IMR-90 (cell line): ENCODE measurements at regions of chrX and their contacts with region 1.

Region 1: GRCh38 chrX:23782863-23783568 is at the start of gene SAT1:
- DNase-seq: peak; percentile 91
- ATAC-seq: peak; percentile 92
- H3K4me3 ChIP-seq: peak within 1 kb of the TSS; percentile 74
- H3K27ac ChIP-seq: peak within 1 kb of the TSS; percentile 78
- H3K4me1 ChIP-seq: no peaks in the 10 kb centered on the region; the same call in 1 of the 2 replicates
- H3K27me3 ChIP-seq: no peaks in the 10 kb centered on the region
- CTCF ChIP-seq: peak; percentile 69
- POLR2A ChIP-seq: peak; percentile 100
- RAD21 ChIP-seq: peak; percentile 58
- total RNA-seq, gene SAT1: 55.9 and 112 TPM in 2 replicates

Region 2: GRCh38 chrX:23694606-23695005 is 88.4 kb before region 1 on chrX:
- CTCF ChIA-PET with region 1: no interaction called
- POLR2A ChIA-PET with region 1: no interaction called
- dilution Hi-C with region 1: no loop called
- in situ Hi-C with region 1: no loop called
- intact Hi-C with region 1: no loop called
- DNase-seq: peak; percentile 57
- ATAC-seq: peak; percentile 96
- H3K4me3 ChIP-seq: no peak overlapping the region
- H3K27ac ChIP-seq: no peak overlapping the region
- H3K4me1 ChIP-seq: no peaks in the 10 kb centered on the region
- H3K27me3 ChIP-seq: no peaks in the 10 kb centered on the region
- CTCF ChIP-seq: peak; percentile 61
- POLR2A ChIP-seq: no peak
- RAD21 ChIP-seq: peak; percentile 66

Region 3: DNA sequence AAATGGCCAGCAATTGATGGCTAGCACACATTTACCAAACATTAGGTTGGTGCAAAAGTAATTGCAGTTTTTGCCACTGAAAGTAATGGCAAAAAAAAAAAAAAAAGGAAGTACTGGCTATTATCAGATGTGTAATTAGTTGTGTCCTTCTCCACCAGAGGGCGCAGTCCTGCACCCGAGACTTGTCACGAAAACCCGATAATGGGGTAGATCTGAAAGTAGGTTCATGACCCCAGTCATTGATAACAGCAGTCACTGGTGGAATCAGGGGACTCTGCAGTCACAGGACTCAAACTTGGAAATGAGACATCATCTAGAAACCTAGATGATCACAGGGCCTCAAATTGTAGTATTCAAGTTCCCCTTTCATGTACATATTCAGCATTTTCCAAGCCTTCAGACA is 26.9 kb before region 1 on chrX:
- CTCF ChIA-PET with region 1: no interaction called
- POLR2A ChIA-PET with region 1: no interaction called
- dilution Hi-C with region 1: no loop called
- in situ Hi-C with region 1: no loop called
- intact Hi-C with region 1: loop called (anchors 1 kb)
- DNase-seq: peak; percentile 41
- ATAC-seq: no peak
- H3K4me3 ChIP-seq: no peak overlapping the region
- H3K27ac ChIP-seq: no peak overlapping the region
- H3K4me1 ChIP-seq: no peaks in the 10 kb centered on the region
- H3K27me3 ChIP-seq: no peaks in the 10 kb centered on the region
- CTCF ChIP-seq: peak; percentile 47
- POLR2A ChIP-seq: no peak
- RAD21 ChIP-seq: peak; percentile 35

Region 4: GRCh38 chrX:24024819-24025740 is 242.1 kb after region 1 on chrX:
- CTCF ChIA-PET with region 1: no interaction called
- POLR2A ChIA-PET with region 1: no interaction called
- dilution Hi-C with region 1: no loop called
- in situ Hi-C with region 1: no loop called
- intact Hi-C with region 1: loop called (anchors 5 kb)
- DNase-seq: peak; percentile 89
- ATAC-seq: peak; percentile 93
- H3K4me3 ChIP-seq: peak overlapping the region; percentile 99
- H3K27ac ChIP-seq: peak overlapping the region; percentile 70
- H3K4me1 ChIP-seq: no peaks in the 10 kb centered on the region
- H3K27me3 ChIP-seq: no peaks in the 10 kb centered on the region; the same call in none of the 2 replicates
- CTCF ChIP-seq: peak; percentile 53
- POLR2A ChIP-seq: peak; percentile 94
- RAD21 ChIP-seq: no peak